ENCODE measurements at regions of chr4 and their contacts with region 1.

Region 1: GRCh38 chr4:149574971-149575370 is 240.7 kb downstream of the IQCM start:
- DNase-seq: no peak
- ATAC-seq: no peak
- H3K4me3 ChIP-seq: no peak overlapping the region
- H3K27ac ChIP-seq: no peak overlapping the region
- H3K4me1 ChIP-seq: no peaks in the 10 kb centered on the region
- H3K27me3 ChIP-seq: no peaks in the 10 kb centered on the region

Region 2: DNA sequence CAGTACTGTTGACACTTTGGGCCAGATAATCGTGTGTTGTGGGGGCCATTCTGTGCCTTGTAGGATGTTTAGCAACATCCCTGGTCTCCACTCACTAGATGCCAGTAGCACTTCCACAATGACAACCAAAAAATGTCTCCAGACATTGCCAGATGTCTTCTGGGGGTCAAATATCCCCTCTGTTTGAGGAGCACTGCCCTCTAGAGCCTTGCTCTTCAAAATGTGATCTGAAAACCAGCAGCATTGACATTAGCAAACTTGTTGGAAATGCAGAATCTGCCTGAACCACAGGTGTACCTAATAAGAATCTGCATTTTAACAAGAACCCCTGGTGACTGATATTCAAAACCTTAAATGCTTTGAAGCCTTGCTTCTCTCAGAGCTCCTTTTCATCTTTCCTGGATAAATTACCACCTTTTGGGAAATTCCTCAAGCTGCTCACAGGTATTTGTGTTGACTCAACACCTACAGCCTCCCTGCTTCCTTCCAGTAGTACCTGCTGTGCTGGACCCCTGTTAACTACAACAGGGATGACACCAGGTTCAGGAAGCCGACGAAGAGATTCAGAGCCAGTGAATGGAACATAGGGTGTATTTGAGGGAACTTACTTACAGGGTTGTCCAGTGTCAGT is 673.8 kb before region 1 on chr4:
- intact Hi-C with region 1: loop called in 1 of 2 experiments (anchors 5 kb)
- DNase-seq: no peak
- ATAC-seq: no peak
- H3K4me3 ChIP-seq: no peak overlapping the region
- H3K27ac ChIP-seq: no peak overlapping the region
- H3K4me1 ChIP-seq: no peaks in the 10 kb centered on the region
- H3K27me3 ChIP-seq: no peaks in the 10 kb centered on the region

Region 3: DNA sequence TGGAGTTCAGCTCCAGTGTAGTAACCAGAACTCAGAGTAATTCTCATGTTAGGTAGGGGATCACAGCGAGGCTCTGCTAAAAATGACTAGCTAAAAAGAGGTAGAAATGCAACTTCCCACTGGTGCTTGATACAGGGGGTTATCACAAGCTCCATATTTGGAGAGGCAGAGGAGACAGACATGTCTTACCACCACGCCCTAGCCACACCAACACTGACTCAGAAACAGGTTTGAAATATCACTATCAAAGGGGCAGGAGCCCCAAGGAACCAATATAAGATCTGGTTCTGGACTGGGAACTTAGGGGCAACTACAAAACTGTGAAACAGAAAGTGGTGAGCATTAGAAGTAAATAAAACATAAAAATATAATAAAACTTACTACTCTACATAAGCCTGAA is 177.8 kb after region 1 on chr4:
- intact Hi-C with region 1: no loop called
- DNase-seq: no peak
- ATAC-seq: no peak
- H3K4me3 ChIP-seq: no peak overlapping the region
- H3K27ac ChIP-seq: no peak overlapping the region
- H3K4me1 ChIP-seq: no peaks in the 10 kb centered on the region
- H3K27me3 ChIP-seq: no peaks in the 10 kb centered on the region